Heart right ventricle (tissue), 16 donors: ENCODE measurements at regions of chr16 and their contacts with region 1.

Region 1: GRCh38 chr16:12289175-12290063 is 312.9 kb downstream of the SNX29 start:
- DNase-seq: no peak
- ATAC-seq: peak in 5 of 8 donors; percentile 42 to 80 (median 73)
- H3K4me3 ChIP-seq: no peak overlapping the region
- H3K27ac ChIP-seq: peak overlapping the region in 8 of 10 donors; percentile 10 to 82 (median 39)
- H3K4me1 ChIP-seq: peaks cover 0 to 25% (median 5%) of the 10 kb centered on the region in 9 donors
- H3K27me3 ChIP-seq: no peaks in the 10 kb centered on the region
- CTCF ChIP-seq: no peak

Region 2: DNA sequence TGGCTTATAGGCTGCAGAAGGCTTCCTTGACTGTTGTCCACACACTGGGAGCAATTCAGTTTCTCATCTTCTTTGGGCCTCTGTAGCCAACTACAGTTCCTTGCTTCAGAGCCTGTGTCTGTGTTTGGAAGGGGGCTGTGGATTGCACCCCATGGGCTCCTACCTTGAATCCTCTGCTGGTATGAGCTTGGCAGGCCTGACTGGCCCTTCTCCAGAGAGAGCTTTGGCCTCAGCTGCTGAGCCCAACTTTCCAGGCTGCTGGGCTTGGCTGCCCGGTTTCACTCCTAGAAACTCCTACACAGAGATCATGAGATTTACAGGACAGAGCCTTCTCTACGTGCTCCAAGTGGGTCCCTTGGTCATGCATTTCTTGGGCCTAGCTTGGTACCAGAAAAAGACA is 41.5 kb after region 1 on chr16:
- intact Hi-C with region 1: loop called in 1 of 10 experiments (anchors 10 kb)
- DNase-seq: peak; percentile 49 to 56
- ATAC-seq: peak; percentile 59 to 87 (median 74)
- H3K4me3 ChIP-seq: no peak overlapping the region
- H3K27ac ChIP-seq: peak overlapping the region in 8 of 10 donors; percentile 21 to 80 (median 46)
- H3K4me1 ChIP-seq: peaks cover 0 to 40% (median 26%) of the 10 kb centered on the region in 9 donors
- H3K27me3 ChIP-seq: no peaks in the 10 kb centered on the region
- CTCF ChIP-seq: no peak

Region 3: DNA sequence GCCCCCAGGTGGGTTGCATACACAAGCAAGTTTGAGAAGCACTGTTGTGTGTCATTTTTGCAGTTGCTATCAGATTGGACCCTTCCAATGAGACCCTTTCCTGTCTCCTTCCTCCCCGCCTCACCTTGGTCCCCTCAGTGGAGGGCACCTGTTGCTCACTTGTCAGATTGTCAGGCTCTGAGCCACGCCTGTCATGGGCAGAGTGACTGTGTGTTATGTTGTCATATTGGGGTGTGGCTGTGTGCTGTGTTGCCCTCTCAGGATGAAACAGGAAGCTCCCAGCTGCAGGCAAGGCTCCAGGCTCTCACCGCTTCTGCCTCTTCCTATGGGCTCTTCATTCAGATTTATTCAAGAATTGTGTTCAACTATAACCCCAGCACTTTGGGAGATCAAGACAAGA is 211.4 kb after region 1 on chr16:
- intact Hi-C with region 1: no loop called
- DNase-seq: peak in 1 of 2 donors; percentile 22
- ATAC-seq: peak in 1 of 8 donors; percentile 67
- H3K4me3 ChIP-seq: no peak overlapping the region
- H3K27ac ChIP-seq: no peak overlapping the region
- H3K4me1 ChIP-seq: peaks cover 0 to 4% (median 0%) of the 10 kb centered on the region in 9 donors
- H3K27me3 ChIP-seq: no peaks in the 10 kb centered on the region
- CTCF ChIP-seq: no peak

Region 4: DNA sequence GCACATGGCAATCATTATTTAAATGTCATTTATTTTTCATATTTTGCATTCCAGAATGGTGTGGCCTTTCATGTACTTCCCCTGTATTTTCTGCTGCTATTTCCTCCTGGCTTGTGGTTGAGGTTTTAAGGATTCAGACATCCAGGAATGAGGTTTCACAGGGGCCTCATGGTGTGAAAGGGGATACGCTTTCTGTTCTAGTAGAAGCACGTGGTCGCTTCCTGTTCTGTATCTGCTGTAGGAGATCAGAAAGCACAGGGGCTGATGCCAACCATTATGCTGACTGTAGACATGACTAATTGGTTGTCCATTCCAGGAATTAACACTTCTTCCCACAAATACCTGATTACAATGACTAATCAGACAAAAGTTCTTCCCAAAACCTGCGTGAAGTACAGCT is 1017.8 kb after region 1 on chr16:
- intact Hi-C with region 1: no loop called
- DNase-seq: no peak
- ATAC-seq: no peak
- H3K4me3 ChIP-seq: no peak overlapping the region
- H3K27ac ChIP-seq: no peak overlapping the region
- H3K4me1 ChIP-seq: no peaks in the 10 kb centered on the region
- H3K27me3 ChIP-seq: peaks cover 0 to 31% (median 0%) of the 10 kb centered on the region in 7 donors
- CTCF ChIP-seq: no peak